Transverse colon (tissue), 4 donors: ENCODE measurements at regions of chr17 and their contacts with region 1.

Region 1: DNA sequence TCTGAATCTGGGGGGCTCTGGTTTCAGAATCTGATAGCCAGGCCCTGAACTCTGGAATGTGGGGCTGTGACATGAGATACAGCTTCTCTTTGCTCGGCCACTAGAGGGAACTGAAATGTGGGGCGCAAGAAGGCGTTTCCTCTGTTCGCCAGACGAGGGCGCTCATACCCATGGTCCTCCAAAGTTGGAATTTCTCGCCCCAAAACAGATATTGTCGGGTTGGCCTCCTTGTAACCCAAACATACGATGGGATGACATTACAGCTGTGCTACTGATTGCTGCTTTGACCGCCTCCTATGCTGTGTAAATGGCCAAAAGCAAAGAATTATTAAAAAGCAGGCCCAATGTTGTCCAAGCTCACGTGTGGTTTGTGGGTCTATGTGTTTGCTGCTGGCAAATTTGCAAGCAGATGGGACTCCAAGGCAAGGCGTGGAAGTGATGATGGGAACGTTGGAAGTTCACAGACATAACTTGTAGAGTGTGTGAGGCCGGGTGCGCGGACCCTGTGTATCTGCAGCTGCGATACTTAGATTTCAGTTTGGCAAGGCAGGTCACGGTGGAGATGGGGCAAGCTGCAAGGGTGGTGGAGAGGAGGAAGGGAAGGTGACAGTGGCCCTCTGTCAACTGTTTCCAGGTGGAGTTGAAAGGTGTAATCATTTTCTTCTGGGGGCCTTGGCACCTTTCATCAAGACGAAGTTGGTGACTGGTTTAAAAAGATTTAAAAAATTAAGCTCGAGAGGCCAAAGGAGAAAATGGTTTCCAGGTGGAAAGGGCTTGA is 13.0 kb upstream of the MSI2 start:
- DNase-seq: peak; percentile 79
- H3K4me3 ChIP-seq: no peak overlapping the region
- H3K27ac ChIP-seq: no peak overlapping the region
- H3K4me1 ChIP-seq: no peaks in the 10 kb centered on the region
- H3K27me3 ChIP-seq: no peaks in the 10 kb centered on the region
- CTCF ChIP-seq: peak; percentile 98 to 99 (median 98)
- EP300 ChIP-seq: no peak
- POLR2A ChIP-seq: no peak

Region 2: GRCh38 chr17:57662644-57663308 is 419.4 kb after region 1 on chr17:
- in situ Hi-C with region 1: loop called in 1 of 4 experiments (anchors 10 kb)
- intact Hi-C with region 1: no loop called
- DNase-seq: peak; percentile 87
- H3K4me3 ChIP-seq: peak overlapping the region in 2 of 4 donors; percentile 24 to 28
- H3K27ac ChIP-seq: peak overlapping the region; percentile 71 to 79 (median 76)
- H3K4me1 ChIP-seq: peaks cover 4 to 7% (median 5%) of the 10 kb centered on the region in 4 donors
- H3K27me3 ChIP-seq: no peaks in the 10 kb centered on the region
- CTCF ChIP-seq: no peak
- EP300 ChIP-seq: no peak
- POLR2A ChIP-seq: no peak